ENCODE measurements at regions of chr14 and their contacts with region 1.

Region 1: DNA sequence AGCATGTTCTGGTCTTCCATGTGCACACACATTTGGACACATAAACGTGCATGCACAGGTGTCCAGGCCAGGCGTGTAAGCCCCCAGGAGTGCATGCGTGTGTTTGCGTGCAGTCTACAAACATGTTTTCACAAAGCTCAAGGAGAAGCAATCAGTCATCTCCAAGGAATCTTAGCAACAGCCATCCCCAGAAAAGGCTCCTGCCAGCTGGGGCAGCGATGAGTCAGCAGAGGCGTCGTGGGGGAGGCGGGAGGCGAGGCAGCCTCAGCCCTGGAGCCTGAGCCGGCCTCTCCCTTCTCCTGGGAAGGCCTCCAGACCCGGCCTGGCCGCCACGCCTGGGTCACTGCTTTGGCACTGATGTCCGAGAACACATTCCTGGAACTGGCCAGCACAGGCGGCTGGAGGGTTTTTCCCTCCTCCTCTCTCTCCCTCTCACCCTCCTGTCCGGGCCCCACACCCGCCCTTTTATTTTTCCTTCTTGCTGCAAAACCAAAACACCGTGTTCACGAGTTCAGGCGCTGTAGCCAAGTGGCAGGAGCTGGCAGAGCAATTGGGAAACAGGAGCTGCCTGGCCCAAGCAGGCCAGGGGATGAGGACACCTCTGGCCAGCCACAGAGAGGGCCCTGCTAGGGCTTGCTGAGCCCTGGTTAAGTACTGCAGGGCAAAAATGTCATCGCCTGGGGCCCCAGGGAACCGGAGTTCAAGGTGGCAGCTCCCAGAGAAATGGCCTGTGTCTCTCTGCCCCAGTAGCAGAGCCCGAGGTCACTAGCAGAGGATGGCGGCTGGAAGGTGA is 92.7 kb downstream of the LRRC74A start:
- DNase-seq: no peak
- H3K4me3 ChIP-seq: peak overlapping the region in 1 of 4 donors; percentile 37
- H3K27ac ChIP-seq: peak overlapping the region; percentile 89 to 99 (median 94)
- H3K4me1 ChIP-seq: peaks cover 60 to 78% (median 64%) of the 10 kb centered on the region in 3 donors
- H3K27me3 ChIP-seq: no peaks in the 10 kb centered on the region
- CTCF ChIP-seq: peak in 3 of 6 experiments; percentile 7 to 33 (median 24)
- POLR2A ChIP-seq: no peak

Region 2: DNA sequence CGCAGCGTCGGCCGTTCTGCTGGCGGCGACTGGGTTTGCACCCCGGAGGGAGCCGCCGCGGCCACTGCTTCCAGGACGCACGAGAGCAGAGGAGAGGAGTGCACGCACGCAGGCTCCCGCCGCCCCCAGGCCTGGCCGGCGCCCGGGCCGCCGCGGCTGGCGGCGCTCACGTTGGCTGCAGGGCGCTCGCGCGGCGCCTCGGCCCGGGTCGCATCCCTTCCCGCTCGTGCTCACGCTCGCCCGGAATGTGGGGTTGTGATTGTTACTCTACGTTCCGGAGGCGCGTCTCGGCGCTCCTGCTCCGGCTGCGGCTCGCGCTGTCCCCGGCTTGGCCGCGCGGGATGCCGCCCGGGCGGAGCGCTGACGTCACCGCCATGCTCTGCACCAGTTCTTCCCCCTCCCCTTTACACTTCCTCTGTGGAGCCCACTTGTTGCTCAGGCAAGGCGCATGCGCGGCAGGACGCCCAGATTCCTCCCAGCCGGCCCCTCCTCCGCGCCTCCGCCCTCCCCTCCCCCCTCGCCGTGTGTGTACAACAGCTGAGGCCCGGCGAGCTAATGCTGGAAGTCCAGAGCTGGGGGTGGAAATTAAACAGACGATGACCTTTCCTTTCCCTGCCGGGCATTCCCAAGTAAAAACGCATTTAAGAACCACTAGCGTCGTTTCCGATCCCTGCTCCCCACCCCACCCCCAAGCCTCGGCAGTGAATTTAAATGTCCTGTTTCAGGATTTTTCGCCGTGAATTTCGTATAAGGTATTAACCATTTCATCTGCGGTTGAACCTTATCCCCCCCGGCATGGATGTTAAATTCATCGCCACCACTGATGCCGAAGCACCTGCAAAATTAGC is 109.7 kb after region 1 on chr14 and contains the start of gene IRF2BPL:
- intact Hi-C with region 1: loop called (anchors 5 kb)
- DNase-seq: peak; percentile 93
- H3K4me3 ChIP-seq: peak within 1 kb of the TSS; percentile 78 to 93 (median 82)
- H3K27ac ChIP-seq: peak within 1 kb of the TSS; percentile 99 to 100 (median 99)
- H3K4me1 ChIP-seq: peaks cover 59 to 85% (median 61%) of the 10 kb centered on the region in 3 donors
- H3K27me3 ChIP-seq: no peaks in the 10 kb centered on the region
- CTCF ChIP-seq: peak in 4 of 6 experiments; percentile 4 to 26 (median 8)
- POLR2A ChIP-seq: peak in 3 of 4 donors; percentile 66 to 99 (median 98)
- total RNA-seq, gene IRF2BPL: 15.8 to 28.8 (median 24.0) TPM

Region 3: GRCh38 chr14:77111043-77111442 is 192.1 kb after region 1 on chr14:
- intact Hi-C with region 1: no loop called
- DNase-seq: no peak
- H3K4me3 ChIP-seq: peak overlapping the region in 1 of 4 donors; percentile 27
- H3K27ac ChIP-seq: peak overlapping the region; percentile 73 to 89 (median 82)
- H3K4me1 ChIP-seq: peaks cover 13 to 62% (median 19%) of the 10 kb centered on the region in 3 donors
- H3K27me3 ChIP-seq: no peaks in the 10 kb centered on the region
- CTCF ChIP-seq: no peak
- POLR2A ChIP-seq: no peak

Measured in esophagus squamous epithelium (tissue), 5 donors.